Heart left ventricle (tissue), 16 donors: ENCODE measurements at regions of chr15 and their contacts with region 1.

Region 1: DNA sequence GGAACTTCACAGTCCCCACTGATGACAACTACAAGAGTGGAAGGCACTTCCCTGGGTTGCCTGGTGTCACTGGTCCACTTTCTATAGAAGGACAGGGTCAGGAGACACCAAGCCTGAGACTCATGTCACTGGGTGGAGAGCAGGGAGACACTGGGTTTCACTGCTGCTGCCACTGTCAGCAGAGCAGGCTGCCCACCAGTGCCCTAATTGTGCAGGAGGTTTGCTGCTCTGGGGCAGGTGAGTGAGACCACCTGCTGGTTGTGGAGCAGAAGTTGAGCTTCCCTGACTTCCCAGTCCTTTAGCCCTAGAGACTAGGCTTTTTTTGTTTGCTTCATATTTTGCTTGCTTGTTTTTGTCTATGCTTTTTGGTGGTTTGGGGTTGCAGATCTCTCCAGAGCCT is 528.4 kb upstream of the RGMA start:
- DNase-seq: peak in 2 of 5 donors; percentile 18 to 30
- ATAC-seq: peak in 2 of 4 donors; percentile 27 to 61
- H3K4me3 ChIP-seq: no peak overlapping the region
- H3K27ac ChIP-seq: no peak overlapping the region
- H3K4me1 ChIP-seq: peaks cover 0 to 13% (median 0%) of the 10 kb centered on the region in 12 donors
- H3K27me3 ChIP-seq: peaks cover 0 to 5% (median 0%) of the 10 kb centered on the region in 9 donors
- CTCF ChIP-seq: peak in 3 of 12 donors; percentile 9 to 18 (median 10)
- POLR2A ChIP-seq: no peak

Region 2: GRCh38 chr15:93080451-93080850 is 537.0 kb before region 1 on chr15:
- intact Hi-C with region 1: loop called in 5 of 10 experiments (anchors 5 to 10 kb)
- DNase-seq: no peak
- ATAC-seq: no peak
- H3K4me3 ChIP-seq: no peak overlapping the region
- H3K27ac ChIP-seq: peak overlapping the region in 1 of 12 donors; percentile 51
- H3K4me1 ChIP-seq: no peaks in the 10 kb centered on the region
- H3K27me3 ChIP-seq: peaks cover 0 to 6% (median 0%) of the 10 kb centered on the region in 9 donors
- CTCF ChIP-seq: no peak
- POLR2A ChIP-seq: no peak

Region 3: DNA sequence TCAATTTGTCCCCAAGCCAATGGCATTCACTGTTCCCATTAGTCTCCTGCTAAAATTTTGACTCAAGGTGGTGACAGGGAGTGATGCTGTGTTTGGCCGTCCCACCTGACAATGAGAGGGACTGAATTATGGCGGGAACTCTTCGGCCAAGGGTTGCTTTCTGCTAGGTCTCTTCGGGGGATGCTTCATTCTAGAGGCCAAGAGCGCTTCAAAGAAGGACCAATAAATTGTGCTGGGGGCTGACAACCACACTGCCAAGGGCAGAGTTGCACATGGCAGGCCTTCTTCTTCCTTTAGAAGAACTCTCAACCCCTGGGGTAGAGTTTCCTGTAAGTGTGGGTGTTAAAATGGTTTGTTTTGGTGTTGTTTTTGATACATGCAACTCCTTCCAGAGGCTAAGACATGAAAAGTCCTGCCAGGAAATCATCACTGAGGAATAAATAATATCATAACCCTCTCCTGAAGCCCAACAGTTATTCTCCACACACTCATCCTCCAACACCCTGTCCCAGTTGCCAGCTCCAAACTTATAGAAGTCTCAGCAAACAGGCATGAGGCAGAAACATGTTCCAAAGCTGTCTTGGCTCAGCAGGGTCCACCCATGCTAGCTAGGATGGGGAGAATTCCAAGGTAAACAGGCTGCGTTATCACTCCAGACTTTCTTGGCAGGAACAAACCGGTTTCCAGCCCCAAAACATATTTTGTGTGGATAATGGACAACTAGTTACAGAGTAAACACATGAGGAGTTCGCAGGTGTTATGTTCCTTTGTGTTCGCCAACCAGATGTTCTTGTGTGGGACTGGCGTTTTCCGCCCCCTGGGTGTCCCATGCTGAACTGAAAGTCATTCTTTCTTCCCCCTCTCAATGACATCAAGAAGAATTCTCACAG is 131.8 kb before region 1 on chr15:
- intact Hi-C with region 1: loop called in 1 of 10 experiments (anchors 10 kb)
- DNase-seq: peak in 4 of 5 donors; percentile 58 to 63 (median 62)
- ATAC-seq: peak; percentile 85 to 91 (median 89)
- H3K4me3 ChIP-seq: no peak overlapping the region
- H3K27ac ChIP-seq: peak overlapping the region in 11 of 12 donors; percentile 4 to 87 (median 63)
- H3K4me1 ChIP-seq: peaks cover 0 to 20% (median 5%) of the 10 kb centered on the region in 12 donors
- H3K27me3 ChIP-seq: no peaks in the 10 kb centered on the region
- CTCF ChIP-seq: peak in 4 of 12 donors; percentile 12 to 44 (median 31)
- POLR2A ChIP-seq: no peak

Region 4: GRCh38 chr15:93587059-93587521 is 30.4 kb before region 1 on chr15:
- intact Hi-C with region 1: loop called in 1 of 10 experiments (anchors 1 kb)
- DNase-seq: peak in 3 of 5 donors; percentile 34 to 56 (median 43)
- ATAC-seq: peak in 3 of 4 donors; percentile 77 to 86 (median 80)
- H3K4me3 ChIP-seq: no peak overlapping the region
- H3K27ac ChIP-seq: peak overlapping the region in 4 of 12 donors; percentile 41 to 75 (median 49)
- H3K4me1 ChIP-seq: peaks cover 0 to 9% (median 0%) of the 10 kb centered on the region in 12 donors
- H3K27me3 ChIP-seq: no peaks in the 10 kb centered on the region
- CTCF ChIP-seq: no peak
- POLR2A ChIP-seq: no peak